Thyroid gland (tissue), 4 donors: ENCODE measurements at regions of chr1 and their contacts with region 1.

Region 1: GRCh38 chr1:16204634-16205337 is 7.7 kb downstream of the ARHGEF19 start:
- DNase-seq: peak; percentile 51 to 61
- H3K4me3 ChIP-seq: no peak overlapping the region
- H3K27ac ChIP-seq: no peak overlapping the region
- H3K4me1 ChIP-seq: peaks cover 15 to 24% of the 10 kb centered on the region in 2 donors
- H3K27me3 ChIP-seq: no peaks in the 10 kb centered on the region
- CTCF ChIP-seq: peak in 4 of 6 experiments; percentile 27 to 37 (median 36)
- POLR2A ChIP-seq: no peak

Region 2: DNA sequence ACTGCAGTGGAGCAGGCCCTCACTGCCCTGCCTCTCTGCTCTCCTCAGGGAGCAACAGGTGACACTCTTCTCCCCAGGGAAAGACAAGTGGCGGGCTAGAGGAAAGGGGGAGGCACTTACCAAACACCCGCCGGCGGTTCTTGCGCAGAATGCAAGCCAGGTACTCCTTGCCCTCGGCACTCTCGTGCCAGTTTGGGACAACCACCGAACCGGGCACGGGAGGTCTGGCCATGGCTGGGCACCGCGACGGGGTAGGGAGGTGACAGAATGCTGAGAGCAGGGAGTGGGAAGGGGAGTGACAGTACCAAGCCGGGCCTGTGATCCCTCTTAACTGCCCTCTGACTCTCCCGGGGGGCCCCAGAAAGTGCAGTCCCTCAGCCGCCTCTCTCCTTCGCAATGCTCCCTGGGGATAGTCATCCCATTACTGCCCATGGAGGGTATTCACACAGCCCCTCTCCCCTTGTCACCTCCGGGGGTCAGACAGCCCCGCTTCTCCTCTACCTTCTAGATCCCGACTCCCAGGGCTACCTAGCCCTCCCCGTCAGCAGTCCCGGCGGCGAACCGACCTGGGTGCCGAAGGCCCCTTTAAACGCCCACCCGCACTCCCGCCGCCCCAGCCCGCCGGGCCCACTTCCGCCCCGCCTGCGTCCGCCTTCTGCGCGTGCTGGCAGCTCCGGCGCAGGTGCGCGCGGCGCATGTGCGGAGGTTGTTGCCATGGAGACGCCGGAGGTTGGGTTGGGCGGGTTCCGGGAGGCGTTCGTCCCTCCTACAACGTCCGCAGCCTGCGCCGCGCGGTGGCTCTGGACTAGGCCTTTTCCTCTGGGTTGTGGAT is 31.9 kb after region 1 on chr1 and contains the start of gene CPLANE2:
- intact Hi-C with region 1: loop called (anchors 5 kb)
- DNase-seq: peak; percentile 94 to 95
- H3K4me3 ChIP-seq: peak within 1 kb of the TSS in 2 of 3 donors; percentile 38 to 66
- H3K27ac ChIP-seq: peak within 1 kb of the TSS; percentile 79 to 89 (median 79)
- H3K4me1 ChIP-seq: peaks cover 7 to 24% of the 10 kb centered on the region in 2 donors
- H3K27me3 ChIP-seq: no peaks in the 10 kb centered on the region
- CTCF ChIP-seq: peak in 1 of 6 experiments; percentile 8
- POLR2A ChIP-seq: peak; percentile 28 to 89
- total RNA-seq, gene CPLANE2: 4.3 to 21.8 (median 15.3) TPM